Calu3 (cell line): ENCODE measurements at regions of chr18 and their contacts with region 1.

Region 1: DNA sequence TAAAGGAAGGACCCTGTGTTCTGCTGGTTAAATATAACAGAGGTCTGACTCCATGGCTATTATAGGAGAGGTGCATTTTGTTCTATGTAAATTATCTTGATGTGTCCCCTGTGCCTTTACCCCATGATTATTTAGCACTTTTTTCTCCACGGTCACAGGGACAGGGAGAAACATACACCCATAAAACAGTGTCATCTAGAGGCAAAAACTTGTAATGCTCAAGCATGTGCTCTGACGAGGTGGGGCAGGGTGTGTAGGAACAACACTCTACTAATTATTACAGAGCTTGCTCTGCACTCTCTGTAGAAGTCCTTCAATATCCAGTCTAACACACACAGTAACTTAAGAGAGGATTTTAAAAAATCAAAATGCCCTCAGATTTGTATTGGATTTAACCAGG is 187.9 kb downstream of the NEDD4L start:
- DNase-seq: peak; percentile 41
- H3K4me3 Mint-ChIP-seq: no peak overlapping the region
- H3K27ac Mint-ChIP-seq: peak overlapping the region; percentile 91
- H3K4me1 Mint-ChIP-seq: peaks cover 83% of the 10 kb centered on the region
- H3K27me3 Mint-ChIP-seq: no peaks in the 10 kb centered on the region
- CTCF ChIP-seq: no peak

Region 2: DNA sequence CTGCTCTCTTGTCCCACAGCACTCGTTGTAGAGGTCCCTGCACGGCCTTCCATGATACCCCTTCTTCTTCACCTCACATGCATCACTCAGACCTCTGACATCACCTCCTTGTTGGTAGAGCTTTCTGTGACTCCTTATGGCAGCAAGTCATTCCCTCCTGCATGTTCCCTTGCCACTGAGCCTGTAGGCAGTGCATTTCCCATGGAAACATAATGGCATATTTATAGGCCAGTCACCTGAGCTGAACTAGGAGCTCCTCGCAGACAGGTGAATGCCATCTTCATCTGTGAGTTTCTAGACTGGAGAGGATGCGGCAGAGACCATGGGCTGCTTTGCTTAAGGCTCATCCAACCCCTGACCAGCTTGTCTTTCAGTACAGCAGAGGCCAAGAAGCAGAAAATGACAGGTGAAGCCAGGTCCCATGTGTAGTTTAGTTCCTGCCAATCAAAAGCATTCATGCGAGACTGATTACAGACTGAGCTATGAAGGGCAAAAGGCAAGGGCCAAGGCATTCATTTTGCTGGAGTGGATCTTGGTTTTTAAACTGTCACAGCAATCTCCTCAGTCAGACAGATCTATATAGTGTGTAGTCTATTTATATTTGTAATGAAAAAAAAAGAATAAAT is 247.3 kb before region 1 on chr18:
- CTCF ChIA-PET with region 1: no interaction called
- intact Hi-C with region 1: no loop called
- DNase-seq: no peak
- H3K4me3 Mint-ChIP-seq: no peak overlapping the region
- H3K27ac Mint-ChIP-seq: no peak overlapping the region
- H3K4me1 Mint-ChIP-seq: peaks cover 26% of the 10 kb centered on the region
- H3K27me3 Mint-ChIP-seq: no peaks in the 10 kb centered on the region
- CTCF ChIP-seq: no peak

Region 3: GRCh38 chr18:58269931-58270330 is 38.0 kb after region 1 on chr18:
- CTCF ChIA-PET with region 1: no interaction called
- intact Hi-C with region 1: loop called (anchors 5 kb)
- DNase-seq: peak; percentile 70
- H3K4me3 Mint-ChIP-seq: peak overlapping the region; percentile 61
- H3K27ac Mint-ChIP-seq: peak overlapping the region; percentile 95
- H3K4me1 Mint-ChIP-seq: peaks cover 90% of the 10 kb centered on the region
- H3K27me3 Mint-ChIP-seq: no peaks in the 10 kb centered on the region
- CTCF ChIP-seq: no peak